Mammary epithelial cell (primary cell): ENCODE measurements at regions of chrX and their contacts with region 1.

Region 1: DNA sequence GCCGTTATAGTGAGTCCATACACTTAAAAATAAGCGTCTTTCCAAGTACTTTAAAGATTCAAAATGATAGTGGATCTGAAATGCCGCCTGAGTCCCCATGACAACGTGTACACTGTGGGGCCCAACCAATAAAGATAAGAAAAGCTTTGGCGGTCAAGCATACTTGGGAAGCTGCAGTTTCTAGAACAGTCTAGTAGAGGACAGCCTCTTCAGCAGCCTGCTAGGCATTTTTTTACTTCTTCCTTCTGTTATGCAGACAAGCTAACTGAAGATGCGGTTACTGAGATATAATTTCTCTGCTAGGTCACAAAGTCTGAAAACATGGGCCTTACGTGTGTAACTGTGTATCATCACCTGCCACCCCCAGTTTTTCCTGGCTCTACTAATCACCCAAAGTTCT is 402 bp upstream of the UPRT start:
- DNase-seq: no peak
- H3K4me3 ChIP-seq: peak overlapping the region; percentile 35 to 67 (median 67)
- H3K27ac ChIP-seq: peak overlapping the region; percentile 70
- H3K4me1 ChIP-seq: no peaks in the 10 kb centered on the region
- H3K27me3 ChIP-seq: no peaks in the 10 kb centered on the region
- CTCF ChIP-seq: no peak

Region 2: GRCh38 chrX:74924449-74925225 is 348.8 kb before region 1 on chrX:
- CTCF ChIA-PET with region 1: no interaction called
- dilution Hi-C with region 1: no loop called
- in situ Hi-C with region 1: no loop called
- intact Hi-C with region 1: loop called (anchors 10 kb)
- DNase-seq: peak; percentile 23
- H3K4me3 ChIP-seq: peak overlapping the region in 2 of 3 experiments; percentile 31 to 41
- H3K27ac ChIP-seq: no peak overlapping the region
- H3K4me1 ChIP-seq: peaks cover 6% of the 10 kb centered on the region
- H3K27me3 ChIP-seq: peaks cover 8% of the 10 kb centered on the region
- CTCF ChIP-seq: no peak

Region 3: GRCh38 chrX:75156021-75156945 is 117.2 kb before region 1 on chrX and contains the start of gene ABCB7:
- CTCF ChIA-PET with region 1: no interaction called
- dilution Hi-C with region 1: no loop called
- in situ Hi-C with region 1: no loop called
- intact Hi-C with region 1: loop called (anchors 10 kb)
- DNase-seq: peak; percentile 64
- H3K4me3 ChIP-seq: peak within 1 kb of the TSS; percentile 50 to 72 (median 67)
- H3K27ac ChIP-seq: peak within 1 kb of the TSS; percentile 66
- H3K4me1 ChIP-seq: no peaks in the 10 kb centered on the region
- H3K27me3 ChIP-seq: no peaks in the 10 kb centered on the region
- CTCF ChIP-seq: peak in 1 of 2 donors; percentile 32
- total RNA-seq, gene ABCB7: 13.5 to 18.2 TPM

Region 4: GRCh38 chrX:75230296-75230695 is 43.2 kb before region 1 on chrX:
- CTCF ChIA-PET with region 1: no interaction called
- dilution Hi-C with region 1: no loop called
- in situ Hi-C with region 1: no loop called
- intact Hi-C with region 1: no loop called
- DNase-seq: no peak
- H3K4me3 ChIP-seq: no peak overlapping the region
- H3K27ac ChIP-seq: no peak overlapping the region
- H3K4me1 ChIP-seq: no peaks in the 10 kb centered on the region
- H3K27me3 ChIP-seq: no peaks in the 10 kb centered on the region
- CTCF ChIP-seq: no peak

Region 5: DNA sequence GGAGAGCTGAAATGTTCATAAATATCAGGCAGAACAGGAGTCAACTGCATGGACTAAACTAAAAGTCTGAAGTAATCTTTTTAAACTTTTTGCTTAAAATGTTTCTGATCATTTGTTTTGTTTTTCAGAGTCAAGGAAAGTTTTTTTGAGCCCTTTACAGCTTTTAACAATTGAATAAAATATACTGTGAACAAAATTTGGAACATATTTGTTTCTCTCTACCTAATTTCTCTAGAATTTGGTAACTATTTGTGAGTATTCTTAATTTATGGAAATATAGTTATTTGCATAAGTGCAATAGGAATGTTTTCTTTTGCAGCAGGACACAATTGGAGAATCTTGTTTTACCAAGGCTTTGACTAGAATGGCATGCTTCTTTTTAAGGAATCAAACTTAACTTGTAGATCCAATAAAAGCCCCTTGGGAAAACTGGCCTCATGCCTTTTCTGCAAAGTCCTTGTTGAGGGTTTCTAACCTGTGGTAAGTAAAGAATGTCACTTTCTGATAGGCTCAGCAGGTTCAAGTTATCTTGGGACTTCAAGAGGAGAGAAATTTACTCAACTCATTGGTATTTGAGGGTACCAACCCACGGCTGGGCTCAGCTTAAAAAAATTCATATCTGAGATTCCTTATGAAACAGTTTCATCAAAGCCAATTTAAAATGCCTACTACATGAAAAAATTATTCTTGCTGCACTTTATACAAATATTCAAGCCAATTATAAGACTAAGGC is 91.9 kb after region 1 on chrX:
- CTCF ChIA-PET with region 1: no interaction called
- dilution Hi-C with region 1: no loop called
- in situ Hi-C with region 1: loop called in 1 of 2 experiments (anchors 25 kb)
- intact Hi-C with region 1: no loop called
- DNase-seq: no peak
- H3K4me3 ChIP-seq: no peak overlapping the region
- H3K27ac ChIP-seq: no peak overlapping the region
- H3K4me1 ChIP-seq: no peaks in the 10 kb centered on the region
- H3K27me3 ChIP-seq: peaks cover 4% of the 10 kb centered on the region
- CTCF ChIP-seq: no peak